ENCODE measurements at regions of chr15 and their contacts with region 1.

Region 1: GRCh38 chr15:78880813-78881212 is 8.1 kb downstream of the MORF4L1 start:
- DNase-seq: no peak
- H3K4me3 Mint-ChIP-seq: no peak overlapping the region
- H3K27ac Mint-ChIP-seq: no peak overlapping the region
- H3K4me1 Mint-ChIP-seq: peaks cover 61% of the 10 kb centered on the region
- H3K27me3 Mint-ChIP-seq: no peaks in the 10 kb centered on the region

Region 2: GRCh38 chr15:78893538-78893937 is 12.7 kb after region 1 on chr15:
- intact Hi-C with region 1: loop called (anchors 1 kb)
- DNase-seq: no peak
- H3K4me3 Mint-ChIP-seq: no peak overlapping the region
- H3K27ac Mint-ChIP-seq: no peak overlapping the region
- H3K4me1 Mint-ChIP-seq: peaks cover 13% of the 10 kb centered on the region
- H3K27me3 Mint-ChIP-seq: no peaks in the 10 kb centered on the region

Measured in activated T-helper 1 cell treated with anti-CD3 and anti-CD28 coated beads, Interleukin-12 subunit alpha, Interleukin-12 subunit beta, Interleukin-2, Interleukin-4 antibody, amounts not matched to agents 30 ng/mL and 10 ng/mL and 1 ng/mL, durations not matched to agents 14 hours and 24 hours and 36 hours (primary cell).